ENCODE measurements at regions of chr22 and their contacts with region 1.

Region 1: DNA sequence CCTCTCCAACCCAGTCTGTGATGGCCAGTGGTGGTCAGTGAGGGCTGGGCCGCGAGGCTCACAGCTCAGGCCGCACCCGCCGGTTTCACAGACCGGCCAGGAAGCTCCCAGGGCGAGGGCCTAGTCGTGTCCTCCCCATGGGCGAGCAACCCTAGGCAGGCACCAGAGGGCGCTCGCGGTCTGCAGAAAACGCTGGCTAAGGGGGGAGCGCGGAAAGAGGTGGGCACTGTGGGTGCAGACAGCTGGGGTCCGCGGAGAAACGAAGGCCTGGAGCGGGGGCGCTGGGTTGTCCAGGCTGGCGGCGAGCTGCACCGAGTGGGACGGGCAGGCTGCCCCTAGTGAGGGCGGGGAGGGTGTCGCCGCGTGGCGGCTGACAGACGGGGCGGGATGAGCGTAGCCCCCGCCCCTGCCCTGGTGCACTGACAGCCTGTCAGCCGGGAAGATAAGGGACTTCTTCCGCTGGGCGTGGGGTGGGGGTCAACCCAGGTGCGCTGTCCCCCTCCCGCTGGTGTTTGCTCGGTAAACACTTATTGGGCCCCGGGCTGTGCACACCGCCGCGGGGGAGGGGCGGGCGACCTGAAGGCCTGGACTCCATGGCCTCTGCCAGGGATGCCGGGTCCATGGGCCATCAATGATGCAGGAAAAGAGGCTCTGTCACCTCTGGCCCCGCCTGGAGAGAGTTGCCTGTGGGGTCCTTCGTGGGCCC is 7.5 kb downstream of the GP1BB start:
- DNase-seq: peak; percentile 84
- H3K4me3 ChIP-seq: peak overlapping the region; percentile 30
- H3K27ac ChIP-seq: no peak overlapping the region
- H3K4me1 ChIP-seq: peaks cover 7% of the 10 kb centered on the region
- H3K27me3 ChIP-seq: peaks cover 5% of the 10 kb centered on the region
- CTCF ChIP-seq: peak; percentile 87

Region 2: DNA sequence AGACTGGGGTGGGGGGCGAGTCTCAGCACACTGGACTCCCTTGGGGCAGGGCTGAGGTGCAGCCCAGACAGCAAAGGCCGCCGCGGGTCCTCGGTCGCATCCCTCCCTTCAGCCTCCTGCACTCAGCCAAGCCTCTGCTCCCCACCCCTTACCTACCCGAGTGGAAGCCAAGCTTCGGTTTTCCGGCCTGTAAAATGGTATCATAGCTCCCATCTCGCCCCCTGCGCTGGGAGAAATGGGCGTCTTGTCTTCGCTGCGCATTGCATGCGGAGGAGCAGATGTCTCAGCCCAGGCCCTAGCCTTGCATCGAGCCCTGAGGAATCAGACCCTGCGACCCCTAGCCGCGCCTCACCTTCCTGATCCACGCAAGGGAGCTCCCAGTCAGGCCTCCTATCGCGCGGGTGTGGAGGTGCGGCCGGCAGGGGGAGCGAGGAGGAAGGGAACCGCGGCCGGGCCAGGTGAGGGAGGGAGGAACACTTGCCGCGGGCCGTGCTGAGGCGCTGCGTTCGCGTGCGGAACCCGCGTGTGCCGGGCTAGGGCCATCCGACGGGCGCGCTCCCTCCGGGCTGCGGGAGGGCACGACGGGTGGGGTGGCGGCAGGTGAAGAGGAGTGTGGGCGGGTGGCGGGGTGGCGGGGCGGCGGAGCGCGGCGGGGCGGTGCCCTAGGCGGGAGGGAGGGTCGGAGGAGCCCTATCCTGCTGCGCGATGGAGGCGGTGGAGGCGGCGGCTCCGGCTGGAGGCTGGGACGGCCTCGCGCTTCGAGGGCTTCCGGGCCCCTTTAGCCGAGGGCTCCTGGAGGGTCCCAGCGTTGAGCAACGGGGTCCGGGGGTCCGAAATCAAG is 25.7 kb after region 1 on chr22:
- intact Hi-C with region 1: no loop called
- DNase-seq: peak; percentile 49
- H3K4me3 ChIP-seq: peak overlapping the region; percentile 8
- H3K27ac ChIP-seq: no peak overlapping the region
- H3K4me1 ChIP-seq: peaks cover 3% of the 10 kb centered on the region
- H3K27me3 ChIP-seq: peaks cover 77% of the 10 kb centered on the region
- CTCF ChIP-seq: peak; percentile 46

Region 3: GRCh38 chr22:19854778-19855503 is 124.1 kb after region 1 on chr22 and contains the starts of genes GNB1L and RTL10:
- intact Hi-C with region 1: no loop called
- DNase-seq: peak; percentile 97
- H3K4me3 ChIP-seq: peak within 1 kb of the TSS; percentile 99
- H3K27ac ChIP-seq: peak within 1 kb of the TSS; percentile 92
- H3K4me1 ChIP-seq: peaks cover 16% of the 10 kb centered on the region
- H3K27me3 ChIP-seq: no peaks in the 10 kb centered on the region
- CTCF ChIP-seq: no peak
- total RNA-seq, gene GNB1L: 4.4 to 10.2 TPM
- total RNA-seq, gene RTL10: 9.7 to 14.1 TPM

Region 4: DNA sequence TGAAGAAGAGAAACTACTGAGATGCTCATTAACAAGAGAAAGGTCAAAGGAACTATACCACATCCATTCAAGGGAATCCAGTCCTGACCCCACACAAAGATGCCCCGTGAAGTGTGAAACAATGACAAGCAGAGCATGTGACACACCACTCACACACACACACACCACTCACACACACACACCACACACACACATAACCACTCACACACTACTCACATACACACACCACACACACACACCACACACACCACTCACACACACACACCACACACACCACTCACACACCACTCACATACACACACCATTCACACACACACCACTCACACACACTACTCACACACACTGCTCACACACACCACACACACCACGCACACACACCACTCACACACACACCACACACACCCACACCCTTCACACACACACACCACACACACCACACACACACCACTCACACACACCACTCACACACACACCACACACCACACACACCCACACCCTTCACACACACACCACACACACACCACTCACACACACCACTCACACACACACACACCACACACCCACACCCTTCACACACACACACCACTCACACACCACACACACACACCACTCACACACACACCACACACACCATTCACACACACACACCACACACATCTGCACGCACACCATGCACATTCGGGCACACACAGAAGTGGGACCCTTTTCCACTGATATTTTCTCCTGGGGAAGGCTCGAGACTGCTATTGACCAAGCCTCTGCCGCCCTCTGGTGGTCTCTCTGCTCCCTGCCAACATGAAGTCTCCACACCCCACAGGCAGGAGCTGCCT is 178.8 kb after region 1 on chr22:
- intact Hi-C with region 1: loop called (anchors 2 kb)
- DNase-seq: peak; percentile 85
- H3K4me3 ChIP-seq: no peak overlapping the region
- H3K27ac ChIP-seq: no peak overlapping the region
- H3K4me1 ChIP-seq: no peaks in the 10 kb centered on the region
- H3K27me3 ChIP-seq: no peaks in the 10 kb centered on the region
- CTCF ChIP-seq: peak; percentile 76

Region 5: GRCh38 chr22:19943082-19944026 is 212.5 kb after region 1 on chr22:
- intact Hi-C with region 1: no loop called
- DNase-seq: no peak
- H3K4me3 ChIP-seq: no peak overlapping the region
- H3K27ac ChIP-seq: peak overlapping the region; percentile 81
- H3K4me1 ChIP-seq: no peaks in the 10 kb centered on the region
- H3K27me3 ChIP-seq: no peaks in the 10 kb centered on the region
- CTCF ChIP-seq: no peak